ENCODE measurements at regions of chr16 and their contacts with region 1.

Region 1: DNA sequence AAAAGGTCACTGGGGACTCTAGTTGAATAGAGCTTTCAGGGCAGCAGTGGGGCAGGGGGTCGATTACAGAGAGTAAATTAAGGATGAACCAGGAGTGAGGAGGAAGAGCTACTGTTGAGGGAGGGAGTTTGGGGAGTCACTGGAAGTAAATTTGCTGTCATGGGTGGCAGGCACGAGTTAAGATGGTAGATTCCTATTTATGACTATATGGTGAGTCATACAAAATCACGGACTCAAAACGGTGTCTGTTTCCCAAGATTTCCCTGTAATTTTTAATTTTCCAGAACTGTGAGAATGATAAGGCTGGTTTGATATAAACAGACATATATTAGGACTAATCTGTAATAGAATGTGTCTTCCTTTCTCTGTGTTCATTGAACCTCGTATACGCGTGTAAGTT is 287.6 kb upstream of the GOT2 start:
- DNase-seq: no peak
- H3K4me3 ChIP-seq: no peak overlapping the region
- H3K4me3 Mint-ChIP-seq: no peak overlapping the region
- H3K27ac Mint-ChIP-seq: no peak overlapping the region
- H3K4me1 ChIP-seq: no peaks in the 10 kb centered on the region
- H3K4me1 Mint-ChIP-seq: peaks cover 13% of the 10 kb centered on the region
- H3K27me3 ChIP-seq: no peaks in the 10 kb centered on the region
- H3K27me3 Mint-ChIP-seq: peaks cover 5% of the 10 kb centered on the region
- CTCF ChIP-seq: no peak

Region 2: GRCh38 chr16:59088431-59088830 is 66.7 kb after region 1 on chr16:
- CTCF ChIA-PET with region 1: no interaction called
- POLR2A ChIA-PET with region 1: no interaction called
- intact Hi-C with region 1: loop called (anchors 10 kb)
- DNase-seq: no peak
- H3K4me3 ChIP-seq: no peak overlapping the region
- H3K4me3 Mint-ChIP-seq: no peak overlapping the region
- H3K27ac Mint-ChIP-seq: no peak overlapping the region
- H3K4me1 ChIP-seq: no peaks in the 10 kb centered on the region
- H3K4me1 Mint-ChIP-seq: no peaks in the 10 kb centered on the region
- H3K27me3 ChIP-seq: no peaks in the 10 kb centered on the region
- H3K27me3 Mint-ChIP-seq: peaks cover 12% of the 10 kb centered on the region
- CTCF ChIP-seq: no peak

Region 3: DNA sequence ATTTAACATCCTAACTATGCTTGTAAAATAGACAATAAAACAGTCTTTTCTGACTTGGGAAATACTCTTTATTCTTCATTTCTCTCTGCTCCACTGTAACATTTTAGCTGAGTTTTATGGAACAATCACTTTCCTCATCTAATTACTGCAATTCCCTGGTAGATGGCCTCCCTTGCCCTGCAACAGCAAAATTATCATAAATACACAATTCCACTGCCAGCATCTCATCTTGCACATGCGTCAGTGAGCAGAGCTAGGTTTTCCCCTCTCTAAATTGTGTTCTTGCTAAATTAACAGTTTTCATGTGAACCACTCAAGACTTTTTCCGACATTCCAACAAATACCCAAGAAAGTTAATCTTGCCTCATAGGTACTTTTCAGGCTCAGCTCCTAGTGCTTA is 633.3 kb after region 1 on chr16:
- CTCF ChIA-PET with region 1: no interaction called
- POLR2A ChIA-PET with region 1: no interaction called
- intact Hi-C with region 1: no loop called
- DNase-seq: no peak
- H3K4me3 ChIP-seq: no peak overlapping the region
- H3K4me3 Mint-ChIP-seq: no peak overlapping the region
- H3K27ac Mint-ChIP-seq: no peak overlapping the region
- H3K4me1 ChIP-seq: no peaks in the 10 kb centered on the region
- H3K4me1 Mint-ChIP-seq: no peaks in the 10 kb centered on the region
- H3K27me3 ChIP-seq: no peaks in the 10 kb centered on the region
- H3K27me3 Mint-ChIP-seq: no peaks in the 10 kb centered on the region
- CTCF ChIP-seq: no peak

Measured in Caco-2 (cell line).